Breast epithelium (tissue), 4 donors: ENCODE measurements at regions of chr9 and their contacts with region 1.

Region 1: GRCh38 chr9:16598316-16598715 is 272.2 kb downstream of the BNC2 start:
- DNase-seq: no peak
- H3K4me3 ChIP-seq: no peak overlapping the region
- H3K27ac ChIP-seq: no peak overlapping the region
- H3K4me1 ChIP-seq: no peaks in the 10 kb centered on the region
- H3K27me3 ChIP-seq: no peaks in the 10 kb centered on the region
- CTCF ChIP-seq: no peak
- POLR2A ChIP-seq: no peak

Region 2: DNA sequence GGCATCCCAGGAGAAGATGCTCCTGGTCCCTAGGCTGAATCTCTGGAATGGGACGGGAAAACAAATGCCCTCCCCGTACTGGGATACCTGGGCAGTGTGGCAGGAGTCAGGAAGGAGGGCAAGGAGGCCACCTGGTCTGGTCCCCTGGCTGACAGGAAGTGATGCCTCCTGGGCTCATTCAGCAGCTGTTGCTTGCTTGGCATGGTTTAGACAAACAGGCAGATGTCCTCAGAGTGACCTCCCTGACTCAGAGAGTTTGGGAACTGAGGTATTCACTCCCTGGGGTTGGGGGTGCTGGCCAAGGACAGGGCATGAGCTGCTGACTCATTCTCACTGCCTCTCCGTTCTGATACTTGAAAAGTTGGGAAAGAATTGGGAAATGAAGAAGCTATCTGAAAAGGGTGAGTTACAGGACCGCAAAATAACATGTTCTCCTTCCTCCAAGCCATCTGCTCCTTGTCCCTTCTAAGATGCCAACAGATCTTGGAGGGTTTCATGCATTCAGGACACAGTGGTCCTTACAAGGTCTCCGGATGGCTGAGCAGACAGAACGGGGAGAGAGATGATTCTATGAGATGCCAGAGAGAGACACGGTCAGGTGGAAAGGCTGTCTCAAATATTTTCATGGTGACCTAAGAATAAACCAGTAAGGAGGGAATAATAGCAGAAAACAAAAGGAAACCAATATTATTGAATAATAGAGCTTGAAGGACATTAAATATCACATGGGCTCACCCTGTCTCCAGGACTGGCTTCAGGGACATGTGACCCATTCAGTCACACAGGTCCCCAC is 262.3 kb before region 1 on chr9:
- intact Hi-C with region 1: loop called (anchors 10 kb)
- DNase-seq: peak in 1 of 2 donors; percentile 28
- H3K4me3 ChIP-seq: no peak overlapping the region
- H3K27ac ChIP-seq: peak overlapping the region; percentile 44 to 75
- H3K4me1 ChIP-seq: no peaks in the 10 kb centered on the region
- H3K27me3 ChIP-seq: no peaks in the 10 kb centered on the region
- CTCF ChIP-seq: no peak
- POLR2A ChIP-seq: no peak

Region 3: DNA sequence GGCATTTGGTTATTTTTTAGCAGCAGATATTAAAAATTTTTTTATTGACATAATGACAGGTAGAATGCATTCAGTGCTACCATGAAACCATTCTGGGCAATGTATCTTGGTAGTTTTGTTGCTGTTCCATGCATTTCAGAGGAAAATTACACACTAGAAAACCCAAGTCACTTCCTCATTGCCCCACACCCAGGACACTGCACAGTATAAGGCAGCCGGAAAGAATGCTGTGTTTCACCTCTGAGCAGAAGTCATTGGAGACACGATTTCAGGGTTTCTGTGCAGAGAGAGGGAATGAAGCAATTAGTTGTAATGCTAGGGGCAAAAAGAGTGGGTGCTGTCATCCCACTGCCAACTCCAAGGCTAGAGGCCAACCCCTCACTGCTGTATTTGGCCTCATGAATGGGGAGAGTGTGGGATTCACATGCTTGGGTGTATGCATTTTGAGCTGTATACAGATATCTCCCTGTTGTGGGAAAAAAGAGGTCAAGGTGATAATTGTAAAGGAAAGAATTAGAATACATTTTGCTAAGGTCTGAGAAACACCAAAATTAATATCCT is 18.4 kb before region 1 on chr9:
- intact Hi-C with region 1: no loop called
- DNase-seq: no peak
- H3K4me3 ChIP-seq: no peak overlapping the region
- H3K27ac ChIP-seq: no peak overlapping the region
- H3K4me1 ChIP-seq: no peaks in the 10 kb centered on the region
- H3K27me3 ChIP-seq: no peaks in the 10 kb centered on the region
- CTCF ChIP-seq: no peak
- POLR2A ChIP-seq: no peak

Region 4: DNA sequence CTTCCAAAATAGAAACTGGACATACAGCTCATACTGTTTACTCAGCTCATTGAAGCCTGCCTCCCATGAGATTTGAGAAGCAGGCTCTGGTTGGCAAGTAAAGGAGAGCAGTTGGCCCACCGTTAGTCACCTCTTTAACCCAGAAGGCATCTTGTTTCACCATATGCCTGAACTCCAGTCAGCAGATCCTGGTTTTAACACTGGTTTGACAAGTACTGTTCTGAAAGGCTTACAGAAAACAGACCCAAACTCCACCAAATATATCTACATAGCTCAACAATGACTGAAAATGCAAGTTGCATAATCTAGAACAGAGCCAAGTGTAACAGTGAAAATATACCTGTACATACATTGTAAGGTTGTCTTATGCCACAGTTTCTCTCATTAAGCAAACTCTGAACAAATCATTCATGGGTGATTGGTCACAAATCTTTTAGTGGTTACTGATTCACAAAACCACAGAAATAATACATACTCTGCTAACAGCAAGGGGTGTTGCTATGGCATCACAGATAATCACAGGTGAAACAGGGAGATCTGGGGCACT is 73.3 kb after region 1 on chr9:
- intact Hi-C with region 1: loop called (anchors 5 kb)
- DNase-seq: no peak
- H3K4me3 ChIP-seq: no peak overlapping the region
- H3K27ac ChIP-seq: no peak overlapping the region
- H3K4me1 ChIP-seq: no peaks in the 10 kb centered on the region
- H3K27me3 ChIP-seq: no peaks in the 10 kb centered on the region
- CTCF ChIP-seq: no peak
- POLR2A ChIP-seq: no peak